Heart left ventricle (tissue), 16 donors: ENCODE measurements at regions of chr5 and their contacts with region 1.

Region 1: DNA sequence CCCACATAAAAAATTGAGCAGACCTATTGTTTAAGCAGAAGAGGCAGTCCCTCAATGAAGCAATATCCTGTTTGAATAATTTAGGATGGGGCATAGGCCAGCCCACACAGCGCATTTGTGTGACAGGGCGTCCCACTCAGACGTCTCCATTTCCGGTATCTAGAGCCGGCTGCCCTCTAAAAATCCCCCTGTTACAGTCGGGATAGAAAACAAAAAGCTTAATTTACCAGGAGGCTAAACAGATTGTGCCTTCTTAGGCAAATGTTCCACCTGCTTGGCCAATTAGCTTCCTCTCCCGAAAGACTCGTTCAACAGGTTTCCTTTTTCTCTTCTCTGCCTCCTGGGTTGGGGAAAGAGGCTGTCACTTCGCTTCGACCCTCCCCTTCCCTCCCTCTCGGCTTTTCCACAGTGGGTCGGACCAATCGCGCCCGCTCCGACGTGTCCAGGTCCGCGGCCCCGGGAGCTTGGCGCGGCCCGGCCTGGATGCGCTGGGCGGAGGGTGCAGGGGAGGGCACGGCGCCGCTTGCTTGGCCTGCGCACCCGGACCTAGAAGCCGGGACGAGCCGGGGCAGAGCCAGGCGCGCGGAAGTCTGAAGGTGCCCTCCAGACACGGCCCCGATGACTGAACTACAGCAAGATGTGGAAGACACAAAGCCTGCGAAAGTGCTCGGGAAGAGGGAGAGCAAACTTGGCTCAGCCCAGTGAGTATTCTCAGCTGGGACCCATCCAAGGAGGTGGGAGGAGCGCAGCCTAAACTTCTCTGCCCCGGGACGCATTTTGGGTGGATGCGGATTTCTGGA is at the start of gene GRAMD2B:
- DNase-seq: peak; percentile 88 to 92 (median 91)
- ATAC-seq: peak; percentile 96 to 99 (median 98)
- H3K4me3 ChIP-seq: peak within 1 kb of the TSS; percentile 55 to 85 (median 72)
- H3K27ac ChIP-seq: peak within 1 kb of the TSS; percentile 79 to 98 (median 94)
- H3K4me1 ChIP-seq: peaks cover 0 to 35% (median 15%) of the 10 kb centered on the region in 12 donors
- H3K27me3 ChIP-seq: no peaks in the 10 kb centered on the region
- CTCF ChIP-seq: no peak
- POLR2A ChIP-seq: peak; percentile 71 to 92
- total RNA-seq, gene GRAMD2B: 28.2 to 50.4 (median 37.0) TPM

Region 2: GRCh38 chr5:126370796-126371718 is 52.1 kb before region 1 on chr5:
- intact Hi-C with region 1: loop called in 4 of 10 experiments (anchors 5 to 10 kb)
- DNase-seq: no peak
- ATAC-seq: peak in 3 of 4 donors; percentile 7 to 21 (median 18)
- H3K4me3 ChIP-seq: no peak overlapping the region
- H3K27ac ChIP-seq: peak overlapping the region in 1 of 12 donors; percentile 11
- H3K4me1 ChIP-seq: peaks cover 0 to 6% (median 0%) of the 10 kb centered on the region in 12 donors
- H3K27me3 ChIP-seq: no peaks in the 10 kb centered on the region
- CTCF ChIP-seq: no peak
- POLR2A ChIP-seq: no peak

Region 3: DNA sequence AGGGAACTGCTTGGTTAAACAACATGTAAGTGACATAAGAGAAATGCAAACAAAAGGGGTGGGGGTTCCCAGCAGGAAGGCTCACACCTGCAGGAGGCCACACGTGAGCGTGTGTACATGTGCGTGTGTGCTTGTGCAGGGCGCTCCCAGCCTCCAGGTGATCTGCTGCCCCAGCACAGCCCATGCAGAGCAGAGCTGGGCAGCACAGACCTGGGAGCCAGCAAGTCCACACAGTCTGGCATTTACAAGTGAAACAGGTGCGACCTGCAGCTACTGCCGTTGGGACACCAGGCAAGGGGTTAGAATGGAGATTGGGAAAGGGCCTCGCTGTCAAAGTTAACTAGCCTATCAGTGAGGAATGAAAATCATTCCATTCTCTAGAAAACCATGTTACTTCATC is 41.8 kb after region 1 on chr5:
- intact Hi-C with region 1: loop called in 4 of 10 experiments (anchors 5 to 10 kb)
- DNase-seq: no peak
- ATAC-seq: peak in 1 of 4 donors; percentile 31
- H3K4me3 ChIP-seq: no peak overlapping the region
- H3K27ac ChIP-seq: no peak overlapping the region
- H3K4me1 ChIP-seq: peaks cover 0 to 28% (median 14%) of the 10 kb centered on the region in 12 donors
- H3K27me3 ChIP-seq: no peaks in the 10 kb centered on the region
- CTCF ChIP-seq: no peak
- POLR2A ChIP-seq: no peak

Region 4: GRCh38 chr5:126483156-126483555 is 60.0 kb after region 1 on chr5:
- intact Hi-C with region 1: loop called in 5 of 10 experiments (anchors 5 to 10 kb)
- DNase-seq: no peak
- ATAC-seq: no peak
- H3K4me3 ChIP-seq: no peak overlapping the region
- H3K27ac ChIP-seq: peak overlapping the region in 1 of 12 donors; percentile 38
- H3K4me1 ChIP-seq: peaks cover 0 to 30% (median 7%) of the 10 kb centered on the region in 12 donors
- H3K27me3 ChIP-seq: no peaks in the 10 kb centered on the region
- CTCF ChIP-seq: no peak
- POLR2A ChIP-seq: no peak

Region 5: DNA sequence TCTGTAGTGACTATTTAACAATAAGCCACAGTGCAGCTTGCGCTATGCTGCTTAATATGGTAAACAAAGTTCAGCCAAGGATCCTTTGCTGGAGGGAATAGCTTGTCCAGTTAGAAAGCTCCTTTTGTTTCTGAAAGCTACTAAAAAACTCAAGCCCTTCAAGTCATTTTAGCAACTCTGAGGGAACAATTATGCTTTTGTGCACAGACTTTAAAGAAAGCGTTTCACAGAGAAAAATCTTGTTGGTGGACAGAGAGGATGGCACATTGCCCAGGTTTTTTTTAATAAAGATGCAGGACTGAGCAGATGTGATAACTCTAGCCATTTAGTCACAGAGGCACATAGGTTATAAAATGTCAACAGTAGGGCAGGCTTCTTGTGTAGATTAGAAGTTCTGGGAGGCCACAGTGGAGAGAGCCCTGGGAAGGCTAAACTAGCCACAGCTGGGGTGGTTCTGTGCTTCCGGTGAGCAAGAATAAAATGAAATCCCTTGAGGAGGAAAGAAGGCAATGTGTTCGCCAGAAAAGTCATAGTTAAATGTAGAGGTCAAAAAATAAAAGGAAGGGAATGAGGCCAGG is 108.4 kb after region 1 on chr5:
- intact Hi-C with region 1: loop called in 4 of 10 experiments (anchors 5 to 10 kb)
- DNase-seq: peak in 3 of 5 donors; percentile 16 to 45 (median 34)
- ATAC-seq: peak in 3 of 4 donors; percentile 75 to 89 (median 86)
- H3K4me3 ChIP-seq: no peak overlapping the region
- H3K27ac ChIP-seq: peak overlapping the region in 11 of 12 donors; percentile 16 to 72 (median 52)
- H3K4me1 ChIP-seq: peaks cover 0 to 16% (median 8%) of the 10 kb centered on the region in 12 donors
- H3K27me3 ChIP-seq: no peaks in the 10 kb centered on the region
- CTCF ChIP-seq: no peak
- POLR2A ChIP-seq: no peak